Left cardiac atrium (tissue), 4 donors: ENCODE measurements at regions of chr16 and their contacts with region 1.

Region 1: DNA sequence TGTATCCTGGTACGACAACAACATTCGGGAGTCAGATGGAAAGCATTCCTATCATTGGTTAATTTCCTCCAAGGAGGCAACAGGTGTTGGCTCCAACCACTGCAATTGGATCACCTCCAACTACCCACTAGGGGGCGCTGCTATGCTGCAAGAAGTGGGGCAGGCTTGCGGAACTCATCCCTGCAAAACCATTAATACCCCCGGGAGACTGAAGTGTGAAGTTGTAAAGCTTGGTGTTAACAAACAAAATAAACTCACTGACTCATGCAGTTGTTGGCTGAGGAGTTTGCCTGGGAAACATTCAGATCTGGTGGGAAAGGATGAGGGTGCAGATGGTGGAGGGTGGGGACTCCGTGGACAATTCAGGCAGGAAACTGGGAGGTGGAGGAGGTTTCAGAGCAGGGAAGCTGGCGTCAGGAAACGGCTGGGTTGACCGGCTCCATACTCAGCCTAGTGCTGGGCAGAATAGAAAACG is 84.9 kb downstream of the HS3ST2 start:
- DNase-seq: peak; percentile 79
- ATAC-seq: peak; percentile 85 to 92

Region 2: GRCh38 chr16:22861580-22861979 is 37.3 kb before region 1 on chr16:
- intact Hi-C with region 1: no loop called
- DNase-seq: no peak
- ATAC-seq: no peak

Region 3: GRCh38 chr16:22948603-22949368 is 49.9 kb after region 1 on chr16:
- intact Hi-C with region 1: loop called in 1 of 2 experiments (anchors 2 kb)
- DNase-seq: peak; percentile 75
- ATAC-seq: peak; percentile 79 to 82

Region 4: GRCh38 chr16:23060458-23061320 is 161.8 kb after region 1 on chr16:
- intact Hi-C with region 1: loop called in 1 of 2 experiments (anchors 2 kb)
- DNase-seq: peak; percentile 67
- ATAC-seq: peak; percentile 78 to 85

Region 5: DNA sequence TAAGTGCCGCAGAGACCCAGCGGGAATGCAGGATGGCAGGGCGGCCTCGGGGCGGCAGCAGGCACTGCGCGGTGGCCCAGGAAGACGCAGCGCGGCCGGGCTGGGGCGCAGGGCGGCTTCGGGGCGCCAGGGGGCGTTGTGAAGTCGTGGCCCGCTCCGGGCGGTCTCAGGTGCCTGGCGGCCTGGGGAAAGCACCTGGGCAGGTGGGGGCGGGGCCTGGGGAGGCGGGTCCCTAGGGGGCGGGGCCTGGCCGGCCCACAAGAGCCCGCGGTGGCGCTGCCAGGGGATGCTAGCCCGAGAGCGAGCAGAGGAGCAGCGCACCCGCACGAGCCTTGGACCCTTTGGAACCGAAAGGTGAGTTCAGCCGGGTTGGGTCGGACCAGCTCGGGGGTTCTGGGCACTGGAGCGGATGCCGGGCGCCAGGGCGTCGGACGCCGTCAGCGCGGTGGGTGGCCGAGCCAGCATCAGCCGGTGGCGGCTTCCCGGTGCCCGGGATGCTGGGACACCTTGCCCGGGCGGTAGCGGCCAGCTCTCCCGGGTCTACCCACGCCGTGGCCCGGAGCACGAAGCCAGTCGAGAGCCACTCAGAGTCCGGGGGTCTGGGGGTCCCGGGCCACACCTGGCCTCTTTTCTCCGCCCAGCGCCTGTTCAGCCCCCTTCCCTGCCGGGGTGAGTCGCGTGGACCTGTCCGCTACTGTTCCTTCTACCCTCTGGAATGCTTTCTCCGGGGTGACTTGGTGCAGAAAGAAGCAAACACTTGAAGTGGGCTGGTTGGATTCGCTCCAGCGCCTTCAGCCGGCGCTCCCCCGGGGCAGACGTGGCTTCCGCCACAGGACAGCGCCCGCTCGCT is 283.8 kb after region 1 on chr16 and contains the start of gene SCNN1G:
- intact Hi-C with region 1: loop called in 1 of 2 experiments (anchors 10 kb)
- DNase-seq: peak; percentile 71
- ATAC-seq: peak; percentile 97 to 98
- total RNA-seq, gene SCNN1G: 0.13 TPM in 1 of 2 donors, not detected in the other

Region 6: DNA sequence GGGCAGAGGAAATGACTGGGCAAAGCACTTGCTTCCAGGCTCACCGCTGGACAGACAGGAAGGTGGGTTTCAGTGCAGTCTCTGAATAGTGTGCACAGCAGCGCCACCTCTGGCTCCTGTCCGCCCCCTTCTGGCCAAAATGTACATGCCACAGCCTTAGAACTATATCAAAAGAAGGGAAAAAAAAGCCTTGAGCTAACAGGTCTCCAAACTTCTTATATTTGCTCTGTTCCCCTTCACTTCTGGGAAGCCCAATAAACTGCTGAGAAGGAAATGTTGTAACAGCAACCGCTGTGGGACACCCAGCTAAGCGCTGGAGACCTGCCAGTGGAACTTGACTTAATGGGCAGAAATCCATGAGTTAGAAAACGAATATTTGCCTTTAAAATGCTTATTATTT is 536.6 kb after region 1 on chr16:
- intact Hi-C with region 1: loop called (anchors 5 to 10 kb)
- DNase-seq: peak; percentile 64
- ATAC-seq: peak; percentile 63 to 83